Heart right ventricle (tissue), 16 donors: ENCODE measurements at regions of chr6 and their contacts with region 1.

Region 1: GRCh38 chr6:13194852-13195251 is 133.5 kb downstream of the TBC1D7 start:
- DNase-seq: peak; percentile 24 to 37
- ATAC-seq: peak in 1 of 8 donors; percentile 62
- H3K4me3 ChIP-seq: no peak overlapping the region
- H3K27ac ChIP-seq: no peak overlapping the region
- H3K4me1 ChIP-seq: peaks cover 0 to 9% (median 0%) of the 10 kb centered on the region in 9 donors
- H3K27me3 ChIP-seq: no peaks in the 10 kb centered on the region
- CTCF ChIP-seq: peak in 8 of 9 donors; percentile 22 to 63 (median 49)

Region 2: GRCh38 chr6:13286181-13286580 is 91.3 kb after region 1 on chr6:
- intact Hi-C with region 1: loop called in 1 of 10 experiments (anchors 10 kb)
- DNase-seq: no peak
- ATAC-seq: peak in 1 of 8 donors; percentile 32
- H3K4me3 ChIP-seq: no peak overlapping the region
- H3K27ac ChIP-seq: no peak overlapping the region
- H3K4me1 ChIP-seq: peaks cover 0 to 10% (median 0%) of the 10 kb centered on the region in 9 donors
- H3K27me3 ChIP-seq: no peaks in the 10 kb centered on the region
- CTCF ChIP-seq: no peak

Region 3: GRCh38 chr6:13302751-13303667 is 108.2 kb after region 1 on chr6:
- intact Hi-C with region 1: loop called in 1 of 10 experiments (anchors 10 kb)
- DNase-seq: peak; percentile 30 to 66
- ATAC-seq: peak; percentile 65 to 89 (median 73)
- H3K4me3 ChIP-seq: peak overlapping the region in 7 of 10 donors; percentile 9 to 36 (median 21)
- H3K27ac ChIP-seq: peak overlapping the region; percentile 30 to 87 (median 71)
- H3K4me1 ChIP-seq: peaks cover 12 to 49% (median 34%) of the 10 kb centered on the region in 9 donors
- H3K27me3 ChIP-seq: no peaks in the 10 kb centered on the region
- CTCF ChIP-seq: no peak

Region 4: GRCh38 chr6:13319891-13320564 is 125.2 kb after region 1 on chr6:
- intact Hi-C with region 1: loop called in 1 of 10 experiments (anchors 5 kb)
- DNase-seq: no peak
- ATAC-seq: no peak
- H3K4me3 ChIP-seq: no peak overlapping the region
- H3K27ac ChIP-seq: no peak overlapping the region
- H3K4me1 ChIP-seq: peaks cover 0 to 10% (median 0%) of the 10 kb centered on the region in 9 donors
- H3K27me3 ChIP-seq: no peaks in the 10 kb centered on the region
- CTCF ChIP-seq: no peak